Posterior vena cava (tissue), 2 donors: ENCODE measurements at regions of chr6 and their contacts with region 1.

Region 1: GRCh38 chr6:41936073-41936837 is 5.4 kb downstream of the CCND3 start:
- DNase-seq: peak; percentile 85

Region 2: GRCh38 chr6:40573221-40573620 is 1363.0 kb before region 1 on chr6:
- intact Hi-C with region 1: no loop called
- DNase-seq: no peak

Region 3: GRCh38 chr6:41787219-41787917 is 148.9 kb before region 1 on chr6 and contains the start of gene TOMM6:
- intact Hi-C with region 1: loop called in 1 of 2 experiments (anchors 10 kb)
- DNase-seq: peak; percentile 99
- total RNA-seq, gene TOMM6: 84.2 to 101 TPM

Region 4: GRCh38 chr6:41958022-41958856 is 22.0 kb after region 1 on chr6:
- intact Hi-C with region 1: no loop called
- DNase-seq: no peak